CD8-positive, alpha-beta memory T cell (primary cell): ENCODE measurements at regions of chr6 and their contacts with region 1.

Region 1: GRCh38 chr6:27157459-27158315 is 89.8 kb upstream of the PRSS16 start:
- DNase-seq: peak; percentile 71 to 88 (median 76)
- H3K4me3 ChIP-seq: peak overlapping the region; percentile 75
- H3K4me3 Mint-ChIP-seq: peak overlapping the region; percentile 79 to 93 (median 84)
- H3K27ac ChIP-seq: peak overlapping the region; percentile 51
- H3K27ac Mint-ChIP-seq: peak overlapping the region; percentile 52 to 90 (median 78)
- H3K4me1 ChIP-seq: peaks cover 15% of the 10 kb centered on the region
- H3K4me1 Mint-ChIP-seq: peaks cover 31 to 44% (median 39%) of the 10 kb centered on the region in 3 donors
- H3K27me3 ChIP-seq: no peaks in the 10 kb centered on the region
- H3K27me3 Mint-ChIP-seq: no peaks in the 10 kb centered on the region

Region 2: DNA sequence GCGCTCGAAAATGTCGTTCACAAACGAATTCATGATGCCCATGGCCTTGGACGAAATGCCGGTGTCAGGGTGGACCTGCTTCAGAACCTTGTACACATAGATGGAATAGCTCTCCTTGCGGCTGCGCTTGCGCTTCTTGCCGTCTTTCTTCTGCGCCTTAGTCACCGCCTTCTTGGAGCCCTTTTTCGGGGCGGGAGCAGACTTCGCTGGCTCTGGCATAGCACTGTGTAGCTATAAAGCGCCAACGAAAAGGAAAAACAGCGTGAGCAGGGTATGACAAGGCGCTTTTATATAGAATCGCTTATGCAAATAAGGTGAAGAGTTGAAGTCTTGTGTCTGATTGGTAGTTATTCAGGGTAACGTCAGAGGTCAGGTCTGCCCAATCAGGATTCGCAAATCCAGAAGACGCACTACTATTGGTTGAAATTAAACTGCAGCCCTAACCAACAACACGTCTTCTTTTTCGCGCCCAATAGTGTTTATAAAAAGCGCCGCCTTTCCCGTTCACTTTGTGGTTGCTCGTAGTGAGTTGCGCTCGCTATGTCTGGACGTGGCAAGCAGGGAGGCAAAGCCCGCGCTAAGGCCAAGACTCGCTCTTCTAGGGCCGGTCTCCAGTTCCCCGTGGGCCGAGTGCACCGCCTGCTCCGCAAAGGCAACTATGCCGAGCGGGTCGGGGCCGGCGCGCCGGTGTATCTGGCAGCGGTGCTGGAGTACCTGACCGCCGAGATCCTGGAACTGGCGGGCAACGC is 25.0 kb before region 1 on chr6:
- CTCF ChIA-PET with region 1: interaction called, 35 read pairs
- POLR2A ChIA-PET with region 1: interaction called, 26 read pairs
- DNase-seq: peak; percentile 77 to 98 (median 96)
- H3K4me3 ChIP-seq: peak overlapping the region; percentile 75
- H3K4me3 Mint-ChIP-seq: no peak overlapping the region
- H3K27ac ChIP-seq: peak overlapping the region; percentile 89
- H3K27ac Mint-ChIP-seq: no peak overlapping the region
- H3K4me1 ChIP-seq: peaks cover 20% of the 10 kb centered on the region
- H3K4me1 Mint-ChIP-seq: peaks cover 7 to 21% (median 16%) of the 10 kb centered on the region in 3 donors
- H3K27me3 ChIP-seq: no peaks in the 10 kb centered on the region
- H3K27me3 Mint-ChIP-seq: peaks cover 0 to 2% of the 10 kb centered on the region in 2 donors

Region 3: DNA sequence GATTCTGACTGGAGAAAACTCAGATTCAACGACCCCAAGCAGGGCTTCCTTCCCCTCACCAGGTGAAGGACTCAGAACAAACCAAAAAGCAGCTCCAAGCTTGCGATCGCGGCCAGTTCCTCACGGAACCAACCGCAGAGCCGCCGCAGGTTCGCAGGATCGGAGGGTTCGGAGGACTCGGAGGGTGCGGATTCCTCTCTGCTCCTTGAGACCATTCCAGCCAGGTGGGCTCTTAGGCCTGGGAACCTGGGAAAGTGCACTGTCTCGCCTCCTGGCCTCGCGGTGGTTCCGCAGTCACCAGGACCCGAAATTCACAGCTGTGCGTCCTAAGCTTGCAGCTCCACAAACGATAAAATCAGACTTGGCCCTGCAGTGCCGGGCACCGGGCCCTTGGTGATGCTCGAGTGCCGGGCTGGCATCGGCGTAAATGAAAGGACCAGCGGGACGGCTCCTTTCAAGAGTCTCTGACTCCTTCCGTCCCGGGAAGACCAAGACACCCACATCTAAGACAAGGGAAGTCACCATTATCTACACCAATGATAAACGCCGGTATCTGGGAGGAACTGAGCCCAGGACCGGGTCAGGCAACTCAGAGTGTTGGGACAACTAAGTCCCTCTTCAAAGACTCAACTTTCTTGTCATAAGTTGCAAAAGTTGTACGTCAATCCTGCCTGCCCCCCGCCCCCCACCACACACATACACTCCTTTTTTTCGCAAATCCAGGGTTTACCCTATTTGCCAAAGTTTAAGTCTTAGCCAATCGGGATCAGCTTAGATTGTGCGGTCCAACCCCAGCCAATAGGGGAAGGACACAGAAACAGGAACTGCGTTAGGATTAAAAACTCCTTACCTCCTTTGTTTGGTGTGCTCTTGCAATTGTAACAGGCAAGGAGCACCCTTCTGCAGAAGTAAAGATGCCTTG is 20.1 kb after region 1 on chr6:
- CTCF ChIA-PET with region 1: interaction called, 26 read pairs
- POLR2A ChIA-PET with region 1: interaction called, 5 read pairs
- DNase-seq: peak; percentile 56 to 80 (median 71)
- H3K4me3 ChIP-seq: peak overlapping the region; percentile 100
- H3K4me3 Mint-ChIP-seq: peak overlapping the region; percentile 93 to 100 (median 97)
- H3K27ac ChIP-seq: peak overlapping the region; percentile 89
- H3K27ac Mint-ChIP-seq: peak overlapping the region; percentile 75 to 100 (median 92)
- H3K4me1 ChIP-seq: no peaks in the 10 kb centered on the region
- H3K4me1 Mint-ChIP-seq: peaks cover 12 to 26% (median 16%) of the 10 kb centered on the region in 3 donors
- H3K27me3 ChIP-seq: no peaks in the 10 kb centered on the region
- H3K27me3 Mint-ChIP-seq: peaks cover 3 to 18% of the 10 kb centered on the region in 2 donors

Region 4: DNA sequence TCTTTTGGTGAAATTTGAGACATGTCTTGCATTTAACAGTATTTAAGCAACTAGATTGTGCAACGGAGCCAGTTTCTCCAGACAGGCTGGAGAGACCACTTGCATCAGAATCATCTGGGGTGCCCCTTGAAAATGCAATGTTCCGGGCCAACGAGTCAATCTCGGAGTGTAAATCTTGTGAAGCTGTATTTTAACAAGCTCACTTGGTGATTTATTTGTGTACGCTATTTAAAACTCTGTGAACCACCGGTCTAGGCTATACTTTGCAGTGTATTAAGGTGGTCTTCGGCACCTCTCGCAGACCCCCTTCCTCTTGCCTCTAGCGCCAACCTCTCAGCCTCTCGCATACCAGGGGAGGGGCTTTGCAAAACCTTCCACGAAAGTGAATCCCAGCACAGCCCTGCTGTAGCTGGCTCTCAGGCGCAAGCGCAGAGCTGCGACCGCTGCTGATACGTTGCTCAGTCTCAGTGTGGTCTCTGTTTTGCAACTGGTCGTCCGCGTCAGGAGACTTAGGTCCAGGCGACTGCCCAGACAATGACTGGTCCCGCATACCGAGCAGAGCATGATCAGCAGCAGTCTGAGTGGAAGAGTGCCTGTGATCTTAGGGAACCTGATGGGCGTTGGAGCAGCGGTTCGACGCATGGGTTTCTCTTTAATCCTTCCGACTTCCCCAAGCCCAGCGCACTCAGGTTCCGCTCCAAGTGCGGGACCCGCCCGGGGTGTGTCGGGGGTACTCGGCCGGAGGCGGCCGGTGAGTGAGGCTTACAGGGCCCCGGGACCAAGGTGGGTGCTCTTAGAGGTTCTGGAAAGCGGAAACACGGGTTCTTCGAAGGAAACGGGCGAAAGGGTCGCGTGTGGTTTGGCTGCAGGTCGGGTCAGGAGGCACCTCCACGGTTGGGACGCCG is 230.9 kb after region 1 on chr6 and contains the start of gene ZNF391:
- CTCF ChIA-PET with region 1: no interaction called
- POLR2A ChIA-PET with region 1: no interaction called
- DNase-seq: peak; percentile 17 to 75 (median 55)
- H3K4me3 ChIP-seq: peak within 1 kb of the TSS; percentile 86
- H3K4me3 Mint-ChIP-seq: peak within 1 kb of the TSS; percentile 91 to 99 (median 96)
- H3K27ac ChIP-seq: peak within 1 kb of the TSS; percentile 73
- H3K27ac Mint-ChIP-seq: peak within 1 kb of the TSS; percentile 8 to 94 (median 90)
- H3K4me1 ChIP-seq: no peaks in the 10 kb centered on the region
- H3K4me1 Mint-ChIP-seq: peaks cover 13 to 22% (median 21%) of the 10 kb centered on the region in 3 donors
- H3K27me3 ChIP-seq: no peaks in the 10 kb centered on the region
- H3K27me3 Mint-ChIP-seq: peaks cover 4 to 7% of the 10 kb centered on the region in 2 donors
- total RNA-seq, gene ZNF391: 2.9 to 3.7 TPM

Region 5: GRCh38 chr6:27795697-27796494 is 638.2 kb after region 1 on chr6:
- CTCF ChIA-PET with region 1: interaction called, 18 read pairs
- POLR2A ChIA-PET with region 1: no interaction called
- DNase-seq: peak in 4 of 5 donors; percentile 39 to 77 (median 64)
- H3K4me3 ChIP-seq: no peak overlapping the region
- H3K4me3 Mint-ChIP-seq: peak overlapping the region in 1 of 7 donors; percentile 40
- H3K27ac ChIP-seq: no peak overlapping the region
- H3K27ac Mint-ChIP-seq: peak overlapping the region in 5 of 8 donors; percentile 3 to 64 (median 53)
- H3K4me1 ChIP-seq: peaks cover 20% of the 10 kb centered on the region
- H3K4me1 Mint-ChIP-seq: peaks cover 22 to 29% (median 28%) of the 10 kb centered on the region in 3 donors
- H3K27me3 ChIP-seq: peaks cover 8% of the 10 kb centered on the region
- H3K27me3 Mint-ChIP-seq: peaks cover 10% of the 10 kb centered on the region in 2 donors